WTC11 (cell line): ENCODE measurements at regions of chr11 and their contacts with region 1.

Region 1: GRCh38 chr11:18775492-18776292 is 15.9 kb downstream of the PTPN5 start:
- DNase-seq: peak; percentile 93
- ATAC-seq: peak; percentile 86
- H3K4me3 Mint-ChIP-seq: no peak overlapping the region
- H3K27ac Mint-ChIP-seq: no peak overlapping the region
- H3K4me1 Mint-ChIP-seq: peaks cover 41% of the 10 kb centered on the region
- H3K27me3 Mint-ChIP-seq: peaks cover under 1% of the 10 kb centered on the region
- CTCF ChIP-seq: peak; percentile 85

Region 2: GRCh38 chr11:18791207-18791968 is 15.7 kb after region 1 on chr11 and contains the start of gene PTPN5:
- CTCF ChIA-PET with region 1: interaction called, 21 read pairs
- POLR2A ChIA-PET with region 1: no interaction called
- DNase-seq: peak; percentile 64
- ATAC-seq: peak; percentile 63
- H3K4me3 Mint-ChIP-seq: peak within 1 kb of the TSS; percentile 83
- H3K27ac Mint-ChIP-seq: no peak within 1 kb of the TSS
- H3K4me1 Mint-ChIP-seq: peaks cover 11% of the 10 kb centered on the region
- H3K27me3 Mint-ChIP-seq: peaks cover 69% of the 10 kb centered on the region
- CTCF ChIP-seq: no peak
- total RNA-seq, gene PTPN5: 4.5 to 7.4 TPM (median 6.7 TPM) in 3 replicates

Region 3: GRCh38 chr11:18802381-18803257 is 26.9 kb after region 1 on chr11:
- CTCF ChIA-PET with region 1: interaction called, 52 read pairs
- POLR2A ChIA-PET with region 1: no interaction called
- DNase-seq: peak; percentile 45
- ATAC-seq: peak; percentile 88
- H3K4me3 Mint-ChIP-seq: no peak overlapping the region
- H3K27ac Mint-ChIP-seq: no peak overlapping the region
- H3K4me1 Mint-ChIP-seq: peaks cover 2% of the 10 kb centered on the region; the same call in 1 of the 2 replicates
- H3K27me3 Mint-ChIP-seq: peaks cover 37% of the 10 kb centered on the region
- CTCF ChIP-seq: peak; percentile 18; the same call in 1 of the 2 replicates

Region 4: GRCh38 chr11:18853086-18853720 is 77.5 kb after region 1 on chr11:
- CTCF ChIA-PET with region 1: interaction called, 12 read pairs
- POLR2A ChIA-PET with region 1: no interaction called
- DNase-seq: peak; percentile 36
- ATAC-seq: peak; percentile 98
- H3K4me3 Mint-ChIP-seq: no peak overlapping the region
- H3K27ac Mint-ChIP-seq: no peak overlapping the region
- H3K4me1 Mint-ChIP-seq: peaks cover 3% of the 10 kb centered on the region
- H3K27me3 Mint-ChIP-seq: peaks cover 31% of the 10 kb centered on the region
- CTCF ChIP-seq: peak; percentile 45; the same call in 1 of the 2 replicates